ENCODE measurements at regions of chr2 and their contacts with region 1.

Region 1: DNA sequence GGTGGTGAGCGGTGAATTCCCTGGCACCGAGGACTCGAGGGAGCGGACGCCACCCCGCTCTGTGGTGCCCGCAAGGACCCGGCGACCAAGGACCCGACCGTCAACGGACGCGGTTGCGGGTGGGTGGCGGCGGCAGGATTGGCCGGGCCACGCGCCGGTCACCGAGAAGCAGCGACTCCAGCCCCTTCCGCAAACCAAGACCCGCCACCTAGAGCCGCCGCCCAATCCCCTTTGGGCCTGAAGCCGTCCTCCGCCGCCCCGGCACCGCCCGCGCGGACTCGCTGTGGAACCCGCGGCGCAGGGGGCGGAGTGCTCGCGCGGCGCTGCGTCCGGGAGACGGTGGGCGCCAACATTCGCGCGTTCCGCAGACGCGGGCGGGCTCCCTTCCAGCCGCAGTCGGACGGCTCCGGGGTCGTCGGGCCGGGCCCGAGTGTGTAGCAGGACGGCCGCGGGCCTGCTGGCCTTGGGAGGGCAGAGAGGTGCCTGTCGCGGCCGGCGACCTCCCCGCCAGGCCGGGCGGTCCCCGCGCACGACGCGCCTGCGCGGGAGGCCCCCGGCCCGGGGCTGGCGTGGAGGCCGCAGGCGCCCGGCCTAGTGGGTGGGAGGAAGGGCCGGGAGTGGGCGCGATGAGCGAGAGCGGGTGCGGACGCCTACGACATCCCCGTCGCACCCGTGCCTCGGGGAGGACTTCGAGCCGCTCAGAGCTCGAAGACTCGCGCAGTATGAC is at the starts of genes FAM228B and PFN4:
- DNase-seq: peak; percentile 85 to 88
- ATAC-seq: peak; percentile 93
- H3K4me3 ChIP-seq: peak within 1 kb of the TSS; percentile 80 to 94 (median 84)
- H3K27ac ChIP-seq: peak within 1 kb of the TSS; percentile 86 to 93 (median 91)
- H3K4me1 ChIP-seq: peaks cover 11 to 17% of the 10 kb centered on the region in 2 donors
- H3K27me3 ChIP-seq: no peaks in the 10 kb centered on the region
- CTCF ChIP-seq: no peak
- POLR2A ChIP-seq: peak; percentile 84 to 88
- total RNA-seq, gene FAM228B: 3.0 to 6.7 (median 4.3) TPM
- total RNA-seq, gene PFN4: not detected

Region 2: GRCh38 chr2:24046930-24047702 is 76.2 kb before region 1 on chr2 and contains the start of gene WDCP:
- in situ Hi-C with region 1: loop called in 1 of 4 experiments (anchors 10 kb)
- intact Hi-C with region 1: loop called (anchors 2 kb)
- DNase-seq: peak; percentile 97
- ATAC-seq: peak; percentile 100
- H3K4me3 ChIP-seq: peak within 1 kb of the TSS; percentile 68 to 98 (median 90)
- H3K27ac ChIP-seq: peak within 1 kb of the TSS; percentile 79 to 85 (median 82)
- H3K4me1 ChIP-seq: peaks cover 19 to 27% of the 10 kb centered on the region in 2 donors
- H3K27me3 ChIP-seq: peaks cover 8 to 21% (median 18%) of the 10 kb centered on the region in 3 donors
- CTCF ChIP-seq: no peak
- POLR2A ChIP-seq: peak; percentile 47 to 80
- total RNA-seq, gene WDCP: 4.8 to 8.4 (median 8.3) TPM

Measured in gastrocnemius medialis (tissue), 4 donors.